ENCODE measurements at regions of chr16 and their contacts with region 1.

Region 1: GRCh38 chr16:62225697-62226280 is 189.6 kb upstream of the CDH8 start:
- DNase-seq: peak; percentile 86 to 92
- H3K4me3 ChIP-seq: no peak overlapping the region
- H3K27ac ChIP-seq: no peak overlapping the region
- H3K4me1 ChIP-seq: no peaks in the 10 kb centered on the region
- H3K27me3 ChIP-seq: no peaks in the 10 kb centered on the region
- CTCF ChIP-seq: peak; percentile 60 to 85 (median 83)
- EP300 ChIP-seq: no peak
- POLR2A ChIP-seq: no peak
- RAD21 ChIP-seq: peak; percentile 70 to 74

Region 2: DNA sequence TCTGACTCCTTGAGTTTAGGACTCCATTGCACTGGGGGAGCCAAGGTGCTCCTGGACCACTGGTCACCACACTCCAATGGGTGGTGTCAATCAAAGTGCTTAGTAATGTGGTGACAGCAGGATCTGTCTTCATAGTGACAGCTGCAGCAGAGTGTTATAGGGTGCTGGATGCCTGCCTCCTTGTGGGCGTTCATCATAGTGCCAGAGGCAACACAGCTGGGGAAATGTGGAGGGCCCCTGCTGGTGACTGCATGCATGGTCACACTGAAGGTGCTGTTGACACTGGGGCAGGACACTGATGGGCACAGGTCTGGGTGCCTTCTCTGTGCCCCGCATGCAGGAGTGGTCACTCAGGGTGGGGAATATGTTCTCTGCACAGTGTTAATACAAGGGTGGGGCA is 12.0 kb before region 1 on chr16:
- CTCF ChIA-PET with region 1: interaction called, 60 read pairs
- POLR2A ChIA-PET with region 1: no interaction called
- DNase-seq: peak; percentile 29 to 60
- H3K4me3 ChIP-seq: no peak overlapping the region
- H3K27ac ChIP-seq: no peak overlapping the region
- H3K4me1 ChIP-seq: no peaks in the 10 kb centered on the region
- H3K27me3 ChIP-seq: no peaks in the 10 kb centered on the region
- CTCF ChIP-seq: peak; percentile 98 to 99 (median 99)
- EP300 ChIP-seq: no peak
- POLR2A ChIP-seq: no peak
- RAD21 ChIP-seq: peak; percentile 64 to 74

Region 3: DNA sequence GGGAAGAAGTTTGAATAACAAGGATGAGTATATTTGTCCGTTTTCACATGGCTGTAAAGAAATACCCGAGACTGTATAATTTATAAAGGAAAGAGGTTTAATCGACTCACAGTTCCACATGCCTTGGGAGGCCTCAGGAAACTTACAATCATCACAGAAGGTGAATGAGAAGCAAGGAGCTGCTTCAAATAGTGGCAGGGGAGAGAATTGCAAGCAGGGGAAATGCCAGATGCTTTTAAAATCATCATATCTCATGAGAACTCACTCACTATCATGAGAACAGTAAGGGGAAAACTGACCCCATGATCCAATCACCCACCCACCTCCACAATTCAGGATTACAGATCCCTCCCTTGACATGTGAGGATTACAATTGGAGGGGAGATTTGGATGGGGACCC is 23.3 kb after region 1 on chr16:
- CTCF ChIA-PET with region 1: interaction called, 39 read pairs
- POLR2A ChIA-PET with region 1: no interaction called
- DNase-seq: no peak
- H3K4me3 ChIP-seq: no peak overlapping the region
- H3K27ac ChIP-seq: no peak overlapping the region
- H3K4me1 ChIP-seq: peaks cover 0 to 4% (median under 1%) of the 10 kb centered on the region in 4 experiments; a peak in 1 of 7 replicates
- H3K27me3 ChIP-seq: no peaks in the 10 kb centered on the region
- CTCF ChIP-seq: peak in 1 of 3 experiments; percentile 34; a peak in 2 of 4 replicates
- EP300 ChIP-seq: no peak
- POLR2A ChIP-seq: no peak
- RAD21 ChIP-seq: peak in 1 of 2 experiments; percentile 13; a peak in 1 of 4 replicates

Region 4: DNA sequence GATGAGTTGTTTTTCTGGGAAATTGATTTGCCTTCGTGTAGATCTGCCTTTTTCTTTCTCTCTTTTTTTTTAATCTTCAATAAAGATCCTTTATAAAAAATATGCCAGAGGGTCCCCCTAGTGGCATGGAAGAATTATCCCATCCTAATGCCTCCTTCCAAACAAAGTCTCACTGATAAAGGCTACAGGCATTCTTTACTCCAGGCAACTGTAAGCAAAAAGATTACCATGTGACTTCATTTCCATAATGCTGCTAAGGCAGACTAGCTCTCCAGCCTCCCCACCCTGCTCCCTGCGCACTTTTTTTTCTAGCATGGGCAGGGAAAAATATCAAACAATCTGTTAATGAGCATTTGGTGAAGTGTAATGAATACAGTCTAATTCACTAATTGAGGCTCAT is 30.6 kb after region 1 on chr16:
- CTCF ChIA-PET with region 1: interaction called, 39 read pairs
- POLR2A ChIA-PET with region 1: interaction called, 3 read pairs
- DNase-seq: no peak
- H3K4me3 ChIP-seq: no peak overlapping the region
- H3K27ac ChIP-seq: no peak overlapping the region
- H3K4me1 ChIP-seq: peaks cover 0 to 7% (median under 1%) of the 10 kb centered on the region in 4 experiments; a peak in 3 of 7 replicates
- H3K27me3 ChIP-seq: no peaks in the 10 kb centered on the region; a peak in 1 of 7 replicates
- CTCF ChIP-seq: peak in 2 of 3 experiments; percentile 45 to 46; a peak in 3 of 4 replicates
- EP300 ChIP-seq: no peak
- POLR2A ChIP-seq: no peak
- RAD21 ChIP-seq: peak; percentile 30 to 48

Region 5: GRCh38 chr16:62280506-62280905 is 54.7 kb after region 1 on chr16:
- CTCF ChIA-PET with region 1: interaction called, 11 read pairs
- POLR2A ChIA-PET with region 1: no interaction called
- DNase-seq: no peak
- H3K4me3 ChIP-seq: no peak overlapping the region
- H3K27ac ChIP-seq: no peak overlapping the region
- H3K4me1 ChIP-seq: peaks cover 0 to 4% (median 1%) of the 10 kb centered on the region in 4 experiments; a peak in 3 of 7 replicates
- H3K27me3 ChIP-seq: no peaks in the 10 kb centered on the region
- CTCF ChIP-seq: no peak
- EP300 ChIP-seq: no peak
- POLR2A ChIP-seq: no peak
- RAD21 ChIP-seq: no peak

Region 6: DNA sequence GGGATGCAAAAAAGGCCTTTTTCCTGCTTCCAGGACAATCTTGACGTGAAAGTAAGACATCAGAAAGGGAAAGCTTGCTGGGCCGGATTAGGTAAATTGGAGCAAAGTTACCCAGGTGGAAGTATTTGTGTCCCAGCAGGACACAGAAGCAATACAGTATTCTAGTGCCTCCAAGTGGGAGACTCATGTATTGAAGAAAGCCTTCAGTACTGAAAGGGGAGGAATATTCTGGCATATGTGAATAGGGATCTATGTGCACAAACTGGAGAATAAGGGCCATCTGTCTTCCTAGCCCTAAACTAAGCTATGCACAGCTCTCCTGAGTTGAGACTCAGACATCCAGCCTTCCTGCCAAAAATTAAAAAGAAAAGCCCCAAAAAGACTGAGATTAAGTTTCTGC is 137.7 kb after region 1 on chr16:
- CTCF ChIA-PET with region 1: interaction called, 30 read pairs
- POLR2A ChIA-PET with region 1: no interaction called
- DNase-seq: peak in 1 of 2 experiments; percentile 7
- H3K4me3 ChIP-seq: no peak overlapping the region
- H3K27ac ChIP-seq: no peak overlapping the region
- H3K4me1 ChIP-seq: peaks cover 0 to 4% (median 0%) of the 10 kb centered on the region in 4 experiments; a peak in 1 of 7 replicates
- H3K27me3 ChIP-seq: no peaks in the 10 kb centered on the region
- CTCF ChIP-seq: peak in 2 of 3 experiments; percentile 70 to 73; a peak in 3 of 4 replicates
- EP300 ChIP-seq: no peak
- POLR2A ChIP-seq: no peak
- RAD21 ChIP-seq: peak; percentile 89 to 91

Measured in H1 (cell line).